A673 (cell line): ENCODE measurements at regions of chr3 and their contacts with region 1.

Region 1: DNA sequence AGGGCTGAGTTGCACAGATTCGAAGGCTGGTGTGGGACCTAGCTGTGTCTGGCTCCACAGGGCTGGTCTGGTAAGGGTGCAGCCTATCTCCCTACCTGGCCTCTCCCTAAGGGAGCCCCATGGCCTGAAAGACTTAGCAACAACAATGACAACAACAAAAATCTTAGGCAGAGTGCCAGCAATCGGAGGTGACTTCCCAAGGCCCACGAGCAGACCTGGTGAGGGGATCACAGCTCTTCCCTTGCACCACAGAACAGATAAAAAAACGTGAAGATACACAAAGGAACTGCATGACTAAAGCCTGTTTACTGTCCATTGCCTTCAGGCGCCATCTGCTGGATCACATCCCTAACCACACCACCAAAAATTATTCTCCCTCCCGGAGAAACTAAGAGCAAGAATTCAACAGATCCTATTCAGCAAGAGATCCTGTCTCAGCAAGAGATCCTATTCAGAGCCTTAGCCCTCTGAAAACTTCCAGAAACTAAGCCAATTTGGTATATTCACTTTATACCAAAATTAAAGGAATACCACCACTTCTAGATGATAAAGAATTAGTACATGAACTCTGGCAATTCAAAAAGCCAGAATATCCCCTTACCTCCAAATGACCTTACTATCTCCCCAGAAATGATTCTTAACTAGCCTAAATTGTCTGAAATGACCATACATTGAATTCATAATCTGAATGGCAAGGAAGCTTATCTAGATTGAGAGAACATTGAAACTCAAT is 24.1 kb upstream of the OR5K4 start:
- DNase-seq: peak; percentile 62
- H3K4me3 ChIP-seq: no peak overlapping the region
- H3K27ac ChIP-seq: no peak overlapping the region
- H3K4me1 ChIP-seq: no peaks in the 10 kb centered on the region
- H3K27me3 ChIP-seq: peaks cover 41% of the 10 kb centered on the region
- CTCF ChIP-seq: peak; percentile 76

Region 2: GRCh38 chr3:98039322-98040024 is 290.1 kb before region 1 on chr3:
- CTCF ChIA-PET with region 1: interaction called, 3 read pairs
- POLR2A ChIA-PET with region 1: no interaction called
- intact Hi-C with region 1: loop called (anchors 1 kb)
- DNase-seq: peak; percentile 86
- H3K4me3 ChIP-seq: peak overlapping the region; percentile 28
- H3K27ac ChIP-seq: no peak overlapping the region
- H3K4me1 ChIP-seq: no peaks in the 10 kb centered on the region
- H3K27me3 ChIP-seq: peaks cover 27% of the 10 kb centered on the region
- CTCF ChIP-seq: peak; percentile 93